ENCODE measurements at regions of chr5 and their contacts with region 1.

Region 1: DNA sequence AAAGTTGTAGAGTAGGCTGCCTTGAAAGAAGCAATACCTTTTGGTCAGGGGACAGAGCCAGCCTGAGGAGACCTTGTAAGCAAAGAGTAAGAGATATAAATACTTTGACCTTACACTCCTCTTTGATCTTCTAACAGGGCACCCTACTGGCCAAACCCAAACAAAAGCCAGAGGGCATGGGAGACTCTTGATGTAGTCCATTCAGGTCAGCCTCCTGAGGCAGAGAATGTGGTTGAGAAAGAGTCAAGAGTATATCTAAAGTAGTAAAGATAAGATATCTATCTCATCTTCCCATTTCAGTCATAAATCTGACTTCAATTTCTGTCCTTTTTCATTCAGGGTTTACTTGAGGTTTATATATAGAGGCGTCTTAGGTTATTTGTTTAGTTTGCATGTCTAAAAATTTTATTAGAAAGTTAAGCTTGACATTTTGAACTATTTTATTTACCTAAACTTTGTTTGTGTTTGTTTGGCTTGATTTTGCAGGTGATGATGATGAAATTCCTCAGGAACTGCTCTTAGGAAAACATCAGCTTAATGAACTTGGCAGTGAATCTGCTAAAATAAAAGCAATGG is 125.7 kb downstream of the NIPBL start:
- DNase-seq: peak; percentile 90 to 94
- H3K4me3 ChIP-seq: no peak overlapping the region
- H3K4me3 Mint-ChIP-seq: no peak overlapping the region
- H3K27ac Mint-ChIP-seq: no peak overlapping the region
- H3K4me1 ChIP-seq: peaks cover 21% of the 10 kb centered on the region
- H3K4me1 Mint-ChIP-seq: peaks cover 17% of the 10 kb centered on the region
- H3K27me3 ChIP-seq: no peaks in the 10 kb centered on the region
- H3K27me3 Mint-ChIP-seq: no peaks in the 10 kb centered on the region
- CTCF ChIP-seq: no peak

Region 2: DNA sequence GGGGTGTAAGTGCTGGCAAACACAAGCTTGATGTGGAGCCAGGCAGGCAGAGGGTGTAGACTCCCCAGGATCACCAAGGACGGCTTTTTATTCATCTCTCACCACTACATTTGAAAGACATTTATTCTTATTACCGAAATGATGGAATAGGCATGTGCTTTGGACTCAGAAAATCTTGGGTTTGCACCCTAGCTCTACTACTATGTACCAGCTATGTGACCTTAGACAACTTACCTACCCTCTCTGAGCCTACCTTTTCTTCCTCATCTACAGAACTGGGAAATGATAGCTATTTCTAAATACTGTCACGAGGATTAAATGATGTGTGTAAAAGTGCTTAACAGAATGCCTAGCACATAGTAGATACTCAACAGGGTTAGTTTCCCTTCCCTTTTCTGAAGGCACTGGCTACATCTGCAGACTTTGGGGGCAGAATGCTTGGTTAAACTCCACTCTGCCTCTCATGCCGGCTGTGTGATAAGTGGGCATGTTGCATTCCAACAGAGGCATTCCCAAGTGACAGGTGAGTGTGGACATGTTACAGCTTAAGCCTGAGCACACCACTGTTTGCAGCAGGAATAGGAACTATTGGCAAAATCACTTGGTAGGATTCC is 301.1 kb before region 1 on chr5:
- CTCF ChIA-PET with region 1: no interaction called
- POLR2A ChIA-PET with region 1: no interaction called
- intact Hi-C with region 1: loop called (anchors 1 kb)
- DNase-seq: peak; percentile 32 to 49
- H3K4me3 ChIP-seq: no peak overlapping the region
- H3K4me3 Mint-ChIP-seq: no peak overlapping the region
- H3K27ac Mint-ChIP-seq: peak overlapping the region; percentile 63
- H3K4me1 ChIP-seq: peaks cover 15% of the 10 kb centered on the region
- H3K4me1 Mint-ChIP-seq: peaks cover 35% of the 10 kb centered on the region
- H3K27me3 ChIP-seq: no peaks in the 10 kb centered on the region
- H3K27me3 Mint-ChIP-seq: no peaks in the 10 kb centered on the region
- CTCF ChIP-seq: no peak

Region 3: GRCh38 chr5:36744773-36745589 is 257.3 kb before region 1 on chr5:
- CTCF ChIA-PET with region 1: interaction called, 3 read pairs
- POLR2A ChIA-PET with region 1: no interaction called
- intact Hi-C with region 1: loop called (anchors 2 kb)
- DNase-seq: peak; percentile 93 to 94
- H3K4me3 ChIP-seq: peak overlapping the region; percentile 63
- H3K4me3 Mint-ChIP-seq: peak overlapping the region; percentile 98
- H3K27ac Mint-ChIP-seq: peak overlapping the region; percentile 57
- H3K4me1 ChIP-seq: peaks cover 12% of the 10 kb centered on the region
- H3K4me1 Mint-ChIP-seq: peaks cover 15% of the 10 kb centered on the region
- H3K27me3 ChIP-seq: no peaks in the 10 kb centered on the region; the same call in 1 of the 2 replicates
- H3K27me3 Mint-ChIP-seq: peaks cover 11% of the 10 kb centered on the region
- CTCF ChIP-seq: peak in 1 of 2 experiments; percentile 82

Region 4: GRCh38 chr5:36875790-36876388 is 126.4 kb before region 1 on chr5:
- CTCF ChIA-PET with region 1: interaction called, 3 read pairs
- POLR2A ChIA-PET with region 1: no interaction called
- intact Hi-C with region 1: loop called (anchors 1 kb)
- DNase-seq: peak; percentile 78 to 82
- H3K4me3 ChIP-seq: peak overlapping the region; percentile 52
- H3K4me3 Mint-ChIP-seq: peak overlapping the region; percentile 93
- H3K27ac Mint-ChIP-seq: peak overlapping the region; percentile 95
- H3K4me1 ChIP-seq: peaks cover 30% of the 10 kb centered on the region
- H3K4me1 Mint-ChIP-seq: peaks cover 13% of the 10 kb centered on the region
- H3K27me3 ChIP-seq: no peaks in the 10 kb centered on the region
- H3K27me3 Mint-ChIP-seq: no peaks in the 10 kb centered on the region
- CTCF ChIP-seq: peak in 1 of 2 experiments; percentile 64

Region 5: DNA sequence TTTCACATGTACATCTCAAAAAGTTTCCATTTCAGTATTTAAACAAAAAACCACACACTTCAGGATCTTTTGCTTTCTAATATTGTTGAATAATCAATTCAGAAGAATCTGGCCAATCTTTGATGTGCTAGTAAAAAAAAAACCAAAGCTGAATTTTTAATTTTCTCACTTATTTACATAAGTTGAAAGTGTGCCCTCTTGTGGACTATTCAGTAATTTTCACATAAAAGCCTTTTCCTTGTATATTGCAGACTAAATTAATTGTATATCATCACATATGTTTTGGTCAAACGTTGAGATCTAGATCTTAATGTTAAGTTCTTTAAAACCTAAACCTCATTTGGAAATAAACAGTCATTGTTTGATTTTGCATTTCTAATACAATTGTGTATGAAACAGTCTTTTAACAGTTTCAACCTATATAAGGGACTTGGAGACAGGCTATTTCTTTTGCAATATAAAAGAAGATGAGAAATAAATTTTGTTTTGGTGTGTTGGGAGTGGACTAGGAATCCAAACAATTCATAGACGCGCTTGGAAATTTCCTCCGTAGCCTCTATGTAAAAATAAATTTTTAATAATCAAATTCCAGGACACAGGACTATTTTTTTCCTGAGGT is 57.5 kb before region 1 on chr5:
- CTCF ChIA-PET with region 1: no interaction called
- POLR2A ChIA-PET with region 1: no interaction called
- intact Hi-C with region 1: loop called (anchors 5 kb)
- DNase-seq: peak in 1 of 2 experiments; percentile 30
- H3K4me3 ChIP-seq: no peak overlapping the region
- H3K4me3 Mint-ChIP-seq: no peak overlapping the region
- H3K27ac Mint-ChIP-seq: no peak overlapping the region
- H3K4me1 ChIP-seq: peaks cover under 1% of the 10 kb centered on the region; the same call in 1 of the 2 replicates
- H3K4me1 Mint-ChIP-seq: peaks cover 18% of the 10 kb centered on the region
- H3K27me3 ChIP-seq: no peaks in the 10 kb centered on the region
- H3K27me3 Mint-ChIP-seq: no peaks in the 10 kb centered on the region
- CTCF ChIP-seq: peak; percentile 48 to 64

Region 6: GRCh38 chr5:37086466-37087173 is 84.4 kb after region 1 on chr5:
- CTCF ChIA-PET with region 1: no interaction called
- POLR2A ChIA-PET with region 1: no interaction called
- intact Hi-C with region 1: loop called (anchors 1 kb)
- DNase-seq: peak; percentile 53 to 74
- H3K4me3 ChIP-seq: no peak overlapping the region
- H3K4me3 Mint-ChIP-seq: no peak overlapping the region
- H3K27ac Mint-ChIP-seq: peak overlapping the region; percentile 18
- H3K4me1 ChIP-seq: peaks cover 47% of the 10 kb centered on the region
- H3K4me1 Mint-ChIP-seq: peaks cover 38% of the 10 kb centered on the region
- H3K27me3 ChIP-seq: no peaks in the 10 kb centered on the region
- H3K27me3 Mint-ChIP-seq: no peaks in the 10 kb centered on the region
- CTCF ChIP-seq: no peak